ENCODE measurements at regions of chr2 and their contacts with region 1.

Region 1: GRCh38 chr2:31138037-31138962 is at the start of gene GALNT14:
- DNase-seq: peak; percentile 93
- H3K4me3 Mint-ChIP-seq: peak within 1 kb of the TSS; percentile 97
- H3K27ac Mint-ChIP-seq: peak within 1 kb of the TSS; percentile 64
- H3K4me1 Mint-ChIP-seq: peaks cover 39% of the 10 kb centered on the region
- H3K27me3 Mint-ChIP-seq: peaks cover 26% of the 10 kb centered on the region
- CTCF ChIP-seq: peak; percentile 78
- total RNA-seq, gene GALNT14: 50.3 and 61.9 TPM in 2 replicates

Region 2: DNA sequence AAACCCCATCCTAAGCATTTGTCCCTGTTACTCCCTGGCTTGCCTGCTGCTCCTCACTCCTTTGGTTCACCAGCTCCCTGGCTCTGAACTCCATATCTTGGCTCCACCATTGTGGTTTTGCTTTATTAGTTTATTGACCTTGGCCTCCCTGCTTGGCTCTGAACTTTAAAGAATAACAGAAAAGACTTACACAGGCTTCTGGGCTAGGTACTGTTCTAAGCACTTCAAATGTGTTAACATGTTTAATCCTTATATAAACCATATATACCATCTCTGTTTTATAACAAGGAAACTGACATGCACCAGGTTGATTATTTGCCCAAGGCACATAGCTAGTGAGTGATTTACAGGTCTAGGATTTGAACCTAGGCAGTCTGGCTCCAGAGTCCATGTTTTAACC is 181.3 kb before region 1 on chr2:
- CTCF ChIA-PET with region 1: no interaction called
- intact Hi-C with region 1: no loop called
- DNase-seq: no peak
- H3K4me3 Mint-ChIP-seq: no peak overlapping the region
- H3K27ac Mint-ChIP-seq: no peak overlapping the region
- H3K4me1 Mint-ChIP-seq: no peaks in the 10 kb centered on the region
- H3K27me3 Mint-ChIP-seq: no peaks in the 10 kb centered on the region
- CTCF ChIP-seq: no peak

Region 3: DNA sequence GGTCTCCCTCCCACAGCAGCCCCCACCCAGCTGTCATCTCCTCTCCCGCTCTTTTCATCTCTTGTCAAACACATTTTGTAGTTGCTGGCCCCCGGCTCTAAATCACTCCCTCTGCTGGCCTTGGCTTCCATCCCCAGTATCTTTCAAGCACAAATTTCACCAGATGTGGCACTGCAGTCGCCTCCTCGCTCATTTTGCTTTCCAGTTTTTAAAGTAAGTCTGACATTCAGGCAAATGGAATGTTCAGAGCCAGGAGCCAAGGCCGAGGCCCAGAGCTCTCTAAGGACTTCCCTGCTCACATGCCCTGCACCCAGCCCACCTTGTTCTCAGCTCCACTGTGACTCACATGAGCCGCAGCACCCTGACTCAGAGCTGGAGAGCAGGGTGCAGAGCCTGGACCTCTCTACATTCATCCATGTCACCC is 158.5 kb before region 1 on chr2:
- CTCF ChIA-PET with region 1: interaction called, 3 read pairs
- intact Hi-C with region 1: loop called (anchors 5 kb)
- DNase-seq: peak; percentile 42
- H3K4me3 Mint-ChIP-seq: no peak overlapping the region
- H3K27ac Mint-ChIP-seq: peak overlapping the region; percentile 1
- H3K4me1 Mint-ChIP-seq: peaks cover 32% of the 10 kb centered on the region
- H3K27me3 Mint-ChIP-seq: no peaks in the 10 kb centered on the region
- CTCF ChIP-seq: no peak

Region 4: GRCh38 chr2:31008561-31009114 is 129.7 kb before region 1 on chr2:
- CTCF ChIA-PET with region 1: no interaction called
- intact Hi-C with region 1: loop called (anchors 10 kb)
- DNase-seq: no peak
- H3K4me3 Mint-ChIP-seq: no peak overlapping the region
- H3K27ac Mint-ChIP-seq: no peak overlapping the region
- H3K4me1 Mint-ChIP-seq: peaks cover 17% of the 10 kb centered on the region
- H3K27me3 Mint-ChIP-seq: no peaks in the 10 kb centered on the region
- CTCF ChIP-seq: no peak

Region 5: GRCh38 chr2:31097962-31098613 is 40.2 kb before region 1 on chr2:
- CTCF ChIA-PET with region 1: no interaction called
- intact Hi-C with region 1: no loop called
- DNase-seq: no peak
- H3K4me3 Mint-ChIP-seq: no peak overlapping the region
- H3K27ac Mint-ChIP-seq: no peak overlapping the region
- H3K4me1 Mint-ChIP-seq: peaks cover 22% of the 10 kb centered on the region
- H3K27me3 Mint-ChIP-seq: no peaks in the 10 kb centered on the region
- CTCF ChIP-seq: no peak

Region 6: DNA sequence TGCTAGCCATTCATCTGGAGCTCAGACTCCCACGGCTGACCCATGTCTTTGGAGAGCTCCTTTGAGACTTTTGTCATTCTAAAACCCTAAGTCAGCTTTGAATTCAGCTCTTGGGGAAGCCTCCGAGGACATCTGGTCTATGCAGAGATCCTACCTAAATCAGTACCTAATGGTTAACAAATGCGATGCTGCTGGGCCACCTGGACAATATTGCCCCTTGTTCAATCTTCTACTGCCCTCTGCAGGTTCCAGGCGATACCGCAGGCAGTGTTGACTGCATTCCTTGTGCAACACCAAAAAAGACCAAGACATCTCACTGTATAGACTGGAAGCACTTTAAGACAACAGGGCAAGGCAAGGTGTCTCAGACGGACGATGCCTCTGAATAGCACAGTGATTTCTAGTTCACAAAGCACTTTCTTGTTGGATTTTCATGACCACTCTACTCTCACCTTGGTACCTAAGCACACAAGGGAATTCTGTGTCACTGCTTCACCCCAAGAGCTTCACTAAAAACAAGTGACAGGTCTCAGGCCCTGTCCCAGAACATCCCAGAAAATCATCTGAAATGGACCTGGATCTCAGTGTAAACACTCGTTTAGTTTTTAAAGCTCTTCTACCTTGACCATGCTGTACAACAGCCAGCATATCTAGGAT is 195.4 kb after region 1 on chr2:
- CTCF ChIA-PET with region 1: interaction called, 4 read pairs
- intact Hi-C with region 1: loop called (anchors 2 kb)
- DNase-seq: peak; percentile 86
- H3K4me3 Mint-ChIP-seq: no peak overlapping the region
- H3K27ac Mint-ChIP-seq: no peak overlapping the region
- H3K4me1 Mint-ChIP-seq: peaks cover 28% of the 10 kb centered on the region
- H3K27me3 Mint-ChIP-seq: no peaks in the 10 kb centered on the region
- CTCF ChIP-seq: peak; percentile 82